Activated CD4-positive, alpha-beta T cell treated with anti-CD3 and anti-CD28 coated beads, Interleukin-2, amount 10 ng/mL, durations not matched to agents 7 days and 5 days (primary cell): ENCODE measurements at regions of chr1 and their contacts with region 1.

Region 1: DNA sequence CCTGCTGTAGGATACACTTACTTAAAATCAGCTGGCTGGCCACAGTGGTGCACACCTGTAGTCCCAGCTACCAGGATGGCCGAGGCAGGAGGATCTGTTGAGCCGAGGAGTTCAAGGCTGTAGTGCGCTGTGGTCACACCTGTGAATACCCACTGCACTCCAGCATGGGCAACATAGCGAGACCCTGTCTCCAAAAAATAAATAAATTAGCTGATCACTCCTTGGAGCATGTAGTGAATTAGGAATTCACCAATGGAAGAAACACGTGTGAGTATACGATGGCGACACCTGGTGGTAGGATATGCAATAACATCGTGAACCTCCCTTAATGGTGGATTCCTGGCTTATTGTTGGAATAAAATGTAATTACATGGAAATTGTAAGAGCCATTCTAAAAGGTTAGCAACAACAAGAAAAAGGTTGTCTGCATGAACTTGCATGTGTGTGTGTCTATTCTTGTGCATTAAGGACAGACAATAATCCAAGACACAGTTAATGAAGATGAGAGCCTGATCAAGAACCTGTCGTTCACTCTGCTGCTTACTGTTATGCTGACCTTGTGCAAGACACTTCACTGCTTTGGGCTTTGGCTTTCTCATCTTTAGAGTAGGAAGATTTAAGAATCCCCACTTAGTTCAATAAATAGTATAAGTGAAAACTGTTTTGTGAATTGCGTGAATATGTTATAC is 38.6 kb upstream of the COX20 start:
- DNase-seq: peak; percentile 61
- H3K4me3 Mint-ChIP-seq: no peak overlapping the region
- H3K27ac Mint-ChIP-seq: no peak overlapping the region
- H3K4me1 Mint-ChIP-seq: no peaks in the 10 kb centered on the region
- H3K27me3 Mint-ChIP-seq: no peaks in the 10 kb centered on the region

Region 2: DNA sequence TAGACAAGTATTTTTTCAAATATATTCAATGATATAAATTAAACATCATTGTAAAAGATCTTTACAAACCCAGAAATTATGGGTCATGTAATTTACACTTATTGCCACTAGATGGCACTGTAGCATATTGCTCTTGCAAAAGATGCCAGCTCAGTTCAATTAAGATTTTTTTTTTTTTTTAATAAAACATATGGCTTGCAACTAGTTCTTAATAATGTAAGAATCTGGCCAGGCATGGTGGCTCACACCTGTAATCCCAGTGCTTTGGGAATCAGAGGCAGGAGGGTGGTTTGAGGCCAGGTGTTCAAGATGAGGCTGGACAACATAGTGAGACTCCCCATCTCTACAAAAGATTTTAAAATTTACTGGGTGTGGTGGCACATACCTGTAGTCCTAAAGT is 193.4 kb before region 1 on chr1:
- CTCF ChIA-PET with region 1: interaction called, 22 read pairs
- POLR2A ChIA-PET with region 1: no interaction called
- DNase-seq: peak; percentile 13
- H3K4me3 Mint-ChIP-seq: no peak overlapping the region
- H3K27ac Mint-ChIP-seq: no peak overlapping the region
- H3K4me1 Mint-ChIP-seq: peaks cover 9% of the 10 kb centered on the region
- H3K27me3 Mint-ChIP-seq: no peaks in the 10 kb centered on the region

Region 3: GRCh38 chr1:244813327-244813726 is 16.5 kb after region 1 on chr1:
- CTCF ChIA-PET with region 1: interaction called, 10 read pairs
- POLR2A ChIA-PET with region 1: no interaction called
- DNase-seq: no peak
- H3K4me3 Mint-ChIP-seq: no peak overlapping the region
- H3K27ac Mint-ChIP-seq: no peak overlapping the region
- H3K4me1 Mint-ChIP-seq: no peaks in the 10 kb centered on the region
- H3K27me3 Mint-ChIP-seq: peaks cover 9% of the 10 kb centered on the region